B cell (primary cell): ENCODE measurements at regions of chr1 and their contacts with region 1.

Region 1: GRCh38 chr1:231679109-231679508 is 52.5 kb downstream of the DISC1 start:
- DNase-seq: no peak
- ATAC-seq: no peak
- H3K4me3 ChIP-seq: no peak overlapping the region
- H3K4me3 Mint-ChIP-seq: no peak overlapping the region
- H3K27ac ChIP-seq: no peak overlapping the region
- H3K27ac Mint-ChIP-seq: no peak overlapping the region
- H3K4me1 ChIP-seq: no peaks in the 10 kb centered on the region
- H3K4me1 Mint-ChIP-seq: no peaks in the 10 kb centered on the region
- H3K27me3 ChIP-seq: peaks cover 0 to 44% (median 22%) of the 10 kb centered on the region in 4 experiments
- H3K27me3 Mint-ChIP-seq: peaks cover 44% of the 10 kb centered on the region
- CTCF ChIP-seq: no peak

Region 2: GRCh38 chr1:232613752-232614381 is 934.8 kb after region 1 on chr1:
- CTCF ChIA-PET with region 1: no interaction called
- POLR2A ChIA-PET with region 1: no interaction called
- intact Hi-C with region 1: loop called (anchors 10 kb)
- DNase-seq: no peak
- ATAC-seq: no peak
- H3K4me3 ChIP-seq: no peak overlapping the region
- H3K4me3 Mint-ChIP-seq: no peak overlapping the region
- H3K27ac ChIP-seq: no peak overlapping the region
- H3K27ac Mint-ChIP-seq: no peak overlapping the region
- H3K4me1 ChIP-seq: no peaks in the 10 kb centered on the region
- H3K4me1 Mint-ChIP-seq: no peaks in the 10 kb centered on the region
- H3K27me3 ChIP-seq: peaks cover 0 to 3% (median 1%) of the 10 kb centered on the region in 4 experiments
- H3K27me3 Mint-ChIP-seq: peaks cover 25% of the 10 kb centered on the region
- CTCF ChIP-seq: no peak